ENCODE measurements at regions of chr15 and their contacts with region 1.

Region 1: DNA sequence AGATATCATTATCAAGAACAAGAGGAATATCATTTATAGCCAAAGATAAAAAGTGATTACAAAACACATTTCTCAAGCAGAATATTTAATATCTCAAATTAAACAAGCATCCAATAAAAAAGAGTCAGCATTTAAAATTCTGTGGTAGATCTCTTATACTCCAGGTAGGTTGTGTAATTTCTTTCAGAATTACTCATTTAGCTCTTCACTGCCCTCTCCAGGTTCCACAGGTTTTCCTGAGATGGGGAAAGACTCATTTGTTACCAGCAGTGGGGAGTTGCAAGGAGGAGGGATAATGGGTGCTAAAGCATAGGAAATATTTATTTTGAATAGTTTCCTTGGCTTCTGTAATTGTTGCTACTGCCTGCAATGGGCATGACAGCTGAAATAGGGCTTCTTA is 83.1 kb upstream of the RASGRP1 start:
- DNase-seq: no peak
- ATAC-seq: no peak
- H3K4me3 ChIP-seq: no peak overlapping the region
- H3K4me3 Mint-ChIP-seq: peak overlapping the region in 6 of 10 donors; percentile 2 to 78 (median 68)
- H3K27ac ChIP-seq: no peak overlapping the region
- H3K27ac Mint-ChIP-seq: peak overlapping the region in 8 of 9 donors; percentile 85 to 99 (median 96)
- H3K4me1 ChIP-seq: peaks cover 47 to 72% of the 10 kb centered on the region in 2 donors
- H3K4me1 Mint-ChIP-seq: peaks cover 48 to 93% (median 85%) of the 10 kb centered on the region in 7 donors
- H3K27me3 ChIP-seq: no peaks in the 10 kb centered on the region
- H3K27me3 Mint-ChIP-seq: no peaks in the 10 kb centered on the region

Region 2: GRCh38 chr15:38490242-38490922 is 157.3 kb before region 1 on chr15:
- CTCF ChIA-PET with region 1: no interaction called
- POLR2A ChIA-PET with region 1: interaction called, 5 read pairs
- intact Hi-C with region 1: loop called in 1 of 2 experiments (anchors 2 kb)
- DNase-seq: no peak
- ATAC-seq: no peak
- H3K4me3 ChIP-seq: no peak overlapping the region
- H3K4me3 Mint-ChIP-seq: no peak overlapping the region
- H3K27ac ChIP-seq: peak overlapping the region; percentile 14
- H3K27ac Mint-ChIP-seq: peak overlapping the region in 8 of 9 donors; percentile 18 to 93 (median 67)
- H3K4me1 ChIP-seq: peaks cover 0 to 13% of the 10 kb centered on the region in 2 donors
- H3K4me1 Mint-ChIP-seq: peaks cover 7 to 48% (median 42%) of the 10 kb centered on the region in 7 donors
- H3K27me3 ChIP-seq: no peaks in the 10 kb centered on the region
- H3K27me3 Mint-ChIP-seq: no peaks in the 10 kb centered on the region

Region 3: DNA sequence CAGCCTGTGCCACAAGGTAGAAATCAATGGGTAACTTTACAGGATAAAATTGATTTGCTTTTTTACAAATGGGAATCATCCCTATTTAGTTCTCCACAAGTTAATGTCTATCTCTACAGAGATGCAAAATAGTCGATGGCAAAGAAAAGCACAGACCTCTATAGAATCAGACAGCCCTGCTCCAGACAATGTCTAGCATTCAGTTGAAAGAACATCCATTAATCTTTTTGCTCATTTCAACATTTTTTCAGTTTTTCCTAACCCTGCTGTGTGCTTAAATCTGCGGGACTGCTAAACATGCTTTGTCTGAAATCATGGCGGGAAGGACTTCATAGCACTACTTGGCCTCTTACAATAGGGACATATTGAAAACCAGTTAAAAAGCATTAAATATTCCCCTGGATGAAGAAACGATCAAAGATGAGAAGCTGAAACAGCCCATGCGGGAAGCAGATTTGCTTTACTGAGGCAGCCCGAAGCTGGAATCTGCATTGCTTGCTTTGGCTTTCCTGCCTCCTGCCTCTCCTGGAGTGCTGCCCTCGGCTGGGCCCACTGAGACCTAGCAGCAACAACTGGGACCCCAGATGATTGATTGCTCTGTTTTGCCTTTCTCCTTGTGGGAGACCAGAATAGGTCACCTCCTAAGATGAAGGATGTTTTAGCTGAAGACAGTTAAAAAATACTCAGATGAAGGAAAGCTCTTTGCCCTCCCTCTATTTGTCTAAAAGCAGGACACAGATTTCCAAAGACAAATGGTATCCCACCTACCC is 44.6 kb before region 1 on chr15:
- CTCF ChIA-PET with region 1: no interaction called
- POLR2A ChIA-PET with region 1: no interaction called
- intact Hi-C with region 1: no loop called
- DNase-seq: no peak
- ATAC-seq: no peak
- H3K4me3 ChIP-seq: no peak overlapping the region
- H3K4me3 Mint-ChIP-seq: no peak overlapping the region
- H3K27ac ChIP-seq: no peak overlapping the region
- H3K27ac Mint-ChIP-seq: no peak overlapping the region
- H3K4me1 ChIP-seq: no peaks in the 10 kb centered on the region
- H3K4me1 Mint-ChIP-seq: peaks cover 0 to 20% (median 4%) of the 10 kb centered on the region in 7 donors
- H3K27me3 ChIP-seq: no peaks in the 10 kb centered on the region
- H3K27me3 Mint-ChIP-seq: peaks cover 0 to 3% (median 0%) of the 10 kb centered on the region in 5 donors

Region 4: DNA sequence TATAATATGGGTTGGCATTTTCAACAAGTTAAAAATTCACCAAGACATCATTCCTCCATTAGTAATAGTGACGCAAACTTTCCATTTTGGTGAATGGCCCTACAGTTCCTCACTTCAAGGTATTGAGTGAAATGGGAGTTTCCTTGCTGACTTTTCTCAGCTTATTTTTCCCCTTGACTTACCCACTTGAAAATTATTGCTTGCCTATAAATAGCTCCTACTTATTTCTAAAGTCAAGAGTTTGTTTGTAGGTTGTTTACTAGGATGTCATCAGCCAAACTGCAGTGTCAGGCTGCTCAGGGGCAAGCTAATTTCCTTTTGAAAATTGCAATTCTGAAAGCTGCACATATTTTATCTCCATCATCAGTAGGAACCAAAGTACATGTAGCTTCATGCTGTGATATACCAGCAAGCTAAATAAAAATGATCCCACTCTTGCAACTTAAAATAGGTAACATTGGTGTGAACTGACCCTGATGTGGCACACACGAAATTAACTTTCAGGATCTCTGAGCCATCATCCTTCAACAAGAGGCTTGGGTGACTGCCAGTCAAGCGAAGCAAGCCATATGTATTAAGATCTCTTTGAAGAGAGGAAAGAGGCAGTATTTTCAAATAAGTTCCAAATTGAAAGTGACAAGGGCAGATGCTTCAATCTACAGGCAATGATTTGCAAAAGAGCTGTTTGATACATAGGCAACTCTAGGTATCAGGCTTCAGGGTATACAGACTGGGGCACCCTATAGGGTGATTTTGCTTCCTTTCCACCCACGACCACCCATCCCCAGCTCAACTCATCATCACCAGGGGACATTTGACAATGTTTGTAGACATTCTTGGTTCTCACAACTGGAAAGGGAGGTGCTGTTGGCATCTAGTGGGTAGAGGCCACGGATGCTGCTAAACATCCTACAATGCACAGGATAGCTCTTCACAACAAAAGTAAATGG is 16.3 kb before region 1 on chr15:
- CTCF ChIA-PET with region 1: interaction called, 10 read pairs
- POLR2A ChIA-PET with region 1: interaction called, 114 read pairs
- intact Hi-C with region 1: no loop called
- DNase-seq: peak in 3 of 9 donors; percentile 18 to 29 (median 28)
- ATAC-seq: no peak
- H3K4me3 ChIP-seq: peak overlapping the region; percentile 9
- H3K4me3 Mint-ChIP-seq: peak overlapping the region in 9 of 10 donors; percentile 12 to 67 (median 32)
- H3K27ac ChIP-seq: peak overlapping the region; percentile 22
- H3K27ac Mint-ChIP-seq: peak overlapping the region; percentile 60 to 92 (median 77)
- H3K4me1 ChIP-seq: peaks cover 3 to 20% of the 10 kb centered on the region in 2 donors
- H3K4me1 Mint-ChIP-seq: peaks cover 20 to 45% (median 41%) of the 10 kb centered on the region in 7 donors
- H3K27me3 ChIP-seq: no peaks in the 10 kb centered on the region
- H3K27me3 Mint-ChIP-seq: no peaks in the 10 kb centered on the region

Region 5: GRCh38 chr15:38671675-38672254 is 24.1 kb after region 1 on chr15:
- CTCF ChIA-PET with region 1: interaction called, 114 read pairs
- POLR2A ChIA-PET with region 1: interaction called, 548 read pairs
- intact Hi-C with region 1: no loop called
- DNase-seq: peak in 8 of 9 donors; percentile 55 to 84 (median 66)
- ATAC-seq: peak; percentile 79
- H3K4me3 ChIP-seq: peak overlapping the region; percentile 28
- H3K4me3 Mint-ChIP-seq: peak overlapping the region; percentile 27 to 86 (median 70)
- H3K27ac ChIP-seq: peak overlapping the region; percentile 90
- H3K27ac Mint-ChIP-seq: peak overlapping the region; percentile 93 to 100 (median 98)
- H3K4me1 ChIP-seq: peaks cover 73 to 74% of the 10 kb centered on the region in 2 donors
- H3K4me1 Mint-ChIP-seq: peaks cover 47 to 88% (median 80%) of the 10 kb centered on the region in 7 donors
- H3K27me3 ChIP-seq: no peaks in the 10 kb centered on the region
- H3K27me3 Mint-ChIP-seq: no peaks in the 10 kb centered on the region

Region 6: DNA sequence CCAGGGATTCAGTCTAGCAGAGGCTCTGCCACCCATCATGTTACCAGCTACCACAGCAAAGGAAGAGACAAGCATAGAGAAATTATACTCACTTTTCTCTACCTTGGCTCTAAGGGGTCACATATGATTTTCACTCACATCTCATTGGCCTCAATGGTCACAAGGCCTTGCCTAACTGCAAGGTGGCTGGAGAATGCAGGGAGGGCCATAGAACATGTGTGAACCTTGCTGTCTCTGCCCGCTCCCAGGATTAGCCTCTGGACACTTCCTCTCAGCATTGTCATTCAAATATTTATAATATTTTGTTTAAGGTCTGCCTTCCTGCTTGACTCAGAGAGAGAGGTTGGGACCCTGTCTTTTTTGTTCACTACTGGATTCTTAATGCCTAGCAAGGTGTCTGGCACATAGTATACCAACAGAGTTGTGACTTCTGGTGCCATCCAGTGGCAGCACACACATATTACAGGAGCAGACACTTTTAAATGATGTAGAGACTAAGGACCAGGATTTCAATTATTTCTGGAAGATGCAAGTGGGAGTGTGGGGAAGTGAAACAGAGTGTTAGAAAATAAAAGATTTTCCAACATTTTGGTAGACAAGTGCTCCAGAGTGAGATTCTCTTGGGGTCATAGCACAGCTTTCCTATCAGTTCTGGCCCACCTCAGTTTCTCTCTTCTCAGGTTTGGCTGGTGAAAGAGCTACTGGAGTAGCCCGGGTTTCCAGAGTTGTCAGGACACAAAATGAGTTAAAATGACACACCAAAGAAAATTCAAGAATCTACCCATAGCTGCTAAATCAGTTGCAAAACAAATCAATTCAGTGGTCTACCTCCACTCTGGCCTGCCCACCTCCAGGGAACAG is 35.9 kb after region 1 on chr15:
- CTCF ChIA-PET with region 1: interaction called, 241 read pairs
- POLR2A ChIA-PET with region 1: interaction called, 231 read pairs
- intact Hi-C with region 1: loop called in 1 of 2 experiments (anchors 1 kb)
- DNase-seq: peak; percentile 43 to 79 (median 71)
- ATAC-seq: peak; percentile 76
- H3K4me3 ChIP-seq: peak overlapping the region; percentile 22
- H3K4me3 Mint-ChIP-seq: peak overlapping the region; percentile 1 to 76 (median 55)
- H3K27ac ChIP-seq: peak overlapping the region; percentile 74
- H3K27ac Mint-ChIP-seq: peak overlapping the region; percentile 83 to 99 (median 95)
- H3K4me1 ChIP-seq: peaks cover 62 to 63% of the 10 kb centered on the region in 2 donors
- H3K4me1 Mint-ChIP-seq: peaks cover 53 to 90% (median 84%) of the 10 kb centered on the region in 7 donors
- H3K27me3 ChIP-seq: no peaks in the 10 kb centered on the region
- H3K27me3 Mint-ChIP-seq: no peaks in the 10 kb centered on the region

Measured in naive thymus-derived CD4-positive, alpha-beta T cell (primary cell).